A673 (cell line): ENCODE measurements at regions of chr3 and their contacts with region 1.

Region 1: GRCh38 chr3:118530350-118530922 is 504.2 kb downstream of the IGSF11 start:
- DNase-seq: no peak
- H3K4me3 ChIP-seq: no peak overlapping the region
- H3K27ac ChIP-seq: no peak overlapping the region
- H3K4me1 ChIP-seq: no peaks in the 10 kb centered on the region
- H3K27me3 ChIP-seq: no peaks in the 10 kb centered on the region
- CTCF ChIP-seq: no peak

Region 2: DNA sequence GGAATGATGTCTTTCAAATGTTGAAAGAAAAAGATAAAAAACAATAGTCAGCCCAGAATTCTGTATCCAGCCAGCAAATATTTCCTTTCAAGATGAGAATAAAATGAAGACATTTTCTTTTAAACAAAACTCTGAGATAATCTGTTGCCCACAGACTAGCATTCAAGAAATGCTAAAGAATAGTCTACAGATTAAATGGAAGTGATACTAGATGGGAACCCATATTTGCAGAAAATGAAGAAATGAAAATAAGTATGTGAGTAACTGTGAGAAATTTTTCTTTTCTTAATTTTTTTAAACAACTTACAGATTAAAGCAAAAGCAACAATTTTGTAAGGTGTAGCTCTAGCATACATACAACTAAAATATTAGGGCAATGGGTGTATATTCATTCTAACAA is 34.4 kb after region 1 on chr3:
- CTCF ChIA-PET with region 1: no interaction called
- POLR2A ChIA-PET with region 1: interaction called, 23 read pairs
- intact Hi-C with region 1: no loop called
- DNase-seq: no peak
- H3K4me3 ChIP-seq: no peak overlapping the region
- H3K27ac ChIP-seq: no peak overlapping the region
- H3K4me1 ChIP-seq: no peaks in the 10 kb centered on the region
- H3K27me3 ChIP-seq: no peaks in the 10 kb centered on the region
- CTCF ChIP-seq: no peak